ENCODE measurements at regions of chr12 and their contacts with region 1.

Region 1: DNA sequence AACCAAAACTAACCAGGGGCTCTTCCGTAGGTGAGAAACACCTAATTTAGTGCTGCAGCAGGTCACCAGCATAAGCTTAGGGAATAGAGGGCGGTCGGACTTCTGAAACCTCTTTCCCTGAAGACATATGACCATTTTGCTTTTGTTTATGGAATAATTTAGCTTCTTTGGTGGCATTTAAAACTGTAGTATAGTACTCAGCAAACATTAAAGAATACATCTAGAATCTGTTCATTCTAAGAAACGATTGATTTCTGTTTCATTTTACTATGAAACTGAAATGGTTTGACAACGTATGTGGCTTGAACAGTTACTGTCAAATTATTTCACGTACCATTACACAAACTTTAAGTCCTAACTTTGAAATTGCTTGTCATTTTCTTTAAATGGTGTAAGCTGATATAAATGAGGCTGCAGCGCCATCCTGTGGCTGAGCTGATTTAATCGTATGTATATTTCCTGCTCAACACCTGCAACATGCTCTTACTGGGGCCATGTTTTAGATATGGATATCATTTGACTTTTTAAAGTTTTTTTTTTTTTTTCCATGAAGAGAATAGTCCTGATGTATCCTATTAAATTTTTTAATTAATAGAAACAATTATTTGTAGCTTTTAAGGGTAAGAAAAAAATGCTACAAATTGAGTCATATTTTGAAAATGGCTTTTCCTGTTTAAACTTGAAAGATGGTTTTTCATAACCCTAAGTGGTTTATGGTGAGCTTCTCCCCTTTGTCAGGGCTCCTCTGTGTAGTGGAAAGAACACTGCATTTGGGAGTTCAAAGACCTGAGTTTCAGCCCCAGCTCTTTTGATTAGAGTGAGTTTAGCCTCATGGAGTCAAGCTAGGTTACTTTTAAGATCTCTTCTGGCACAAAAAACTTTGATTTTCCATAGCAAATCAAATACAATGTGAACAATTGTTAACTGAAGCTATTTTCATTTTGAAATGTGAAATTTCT is 27.4 kb downstream of the CFAP54 start:
- DNase-seq: peak; percentile 65 to 75
- ATAC-seq: peak in 1 of 4 donors; percentile 66
- H3K4me3 ChIP-seq: no peak overlapping the region
- H3K27ac ChIP-seq: no peak overlapping the region
- H3K4me1 ChIP-seq: no peaks in the 10 kb centered on the region
- H3K27me3 ChIP-seq: no peaks in the 10 kb centered on the region
- CTCF ChIP-seq: peak; percentile 54

Region 2: DNA sequence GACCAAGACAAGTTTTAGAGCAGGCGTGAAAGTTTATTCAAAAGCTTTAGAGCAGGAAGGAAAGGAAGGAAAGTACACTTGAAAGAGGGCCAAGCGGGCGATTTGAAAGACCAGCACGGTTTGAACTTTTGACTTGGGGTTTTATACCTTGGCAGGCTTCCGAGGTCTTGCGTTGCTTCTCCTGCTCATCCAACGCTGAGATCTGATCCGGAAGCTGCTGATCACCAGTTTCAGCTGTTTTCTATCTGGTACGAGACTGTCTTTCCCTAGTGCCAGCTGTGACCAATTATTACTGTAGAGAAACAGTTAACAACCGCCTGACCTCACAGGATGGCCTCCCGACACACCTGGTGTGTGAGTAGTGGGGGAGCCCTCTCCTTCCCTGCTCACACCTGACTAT is 678.6 kb before region 1 on chr12:
- intact Hi-C with region 1: no loop called
- DNase-seq: peak in 1 of 2 donors; percentile 40
- ATAC-seq: no peak
- H3K4me3 ChIP-seq: no peak overlapping the region
- H3K27ac ChIP-seq: no peak overlapping the region
- H3K4me1 ChIP-seq: no peaks in the 10 kb centered on the region
- H3K27me3 ChIP-seq: peaks cover 0 to under 1% (median 0%) of the 10 kb centered on the region in 3 donors
- CTCF ChIP-seq: no peak

Region 3: DNA sequence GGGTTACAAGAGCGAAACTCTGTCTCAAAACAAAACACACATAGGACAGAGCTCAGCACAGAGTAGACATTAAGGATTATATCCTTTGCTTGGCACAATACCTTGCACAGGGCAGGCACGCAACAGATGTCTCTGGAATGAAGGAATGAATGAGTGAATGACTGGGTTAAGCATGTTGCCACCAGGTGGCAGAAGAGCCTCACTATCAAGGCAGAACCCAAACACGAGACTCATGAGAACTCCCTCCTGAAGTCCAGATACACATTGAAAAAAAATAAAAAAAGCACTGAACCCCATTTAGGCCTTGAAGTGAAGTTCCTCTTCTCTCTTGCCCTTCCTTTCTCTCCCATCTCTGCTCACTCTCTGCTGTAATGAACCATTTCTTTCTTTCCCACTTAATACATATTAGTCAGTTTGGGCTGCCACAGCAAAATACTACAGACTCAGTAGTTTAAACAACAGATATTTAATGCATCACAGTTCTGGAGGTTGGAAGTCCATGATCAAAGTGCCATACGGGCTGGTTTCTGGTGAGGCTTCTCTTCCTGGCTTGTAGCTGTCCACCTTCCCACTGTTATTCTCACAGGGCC is 454.8 kb before region 1 on chr12:
- intact Hi-C with region 1: loop called (anchors 2 to 10 kb)
- DNase-seq: peak; percentile 66 to 73
- ATAC-seq: peak in 3 of 4 donors; percentile 67 to 78 (median 77)
- H3K4me3 ChIP-seq: no peak overlapping the region
- H3K27ac ChIP-seq: no peak overlapping the region
- H3K4me1 ChIP-seq: no peaks in the 10 kb centered on the region
- H3K27me3 ChIP-seq: no peaks in the 10 kb centered on the region
- CTCF ChIP-seq: peak; percentile 68

Region 4: GRCh38 chr12:96219698-96220206 is 297.0 kb before region 1 on chr12:
- intact Hi-C with region 1: loop called in 1 of 2 experiments (anchors 5 kb)
- DNase-seq: no peak
- ATAC-seq: peak in 3 of 4 donors; percentile 27 to 60 (median 36)
- H3K4me3 ChIP-seq: no peak overlapping the region
- H3K27ac ChIP-seq: no peak overlapping the region
- H3K4me1 ChIP-seq: peaks cover 4% of the 10 kb centered on the region
- H3K27me3 ChIP-seq: peaks cover 0 to 7% (median 0%) of the 10 kb centered on the region in 3 donors
- CTCF ChIP-seq: no peak

Measured in psoas muscle (tissue), 8 donors.